Mammary epithelial cell (primary cell): ENCODE measurements at regions of chr10 and their contacts with region 1.

Region 1: GRCh38 chr10:127556916-127557315 is 7.8 kb downstream of the NPS start:
- DNase-seq: peak; percentile 6
- H3K4me3 ChIP-seq: no peak overlapping the region
- H3K27ac ChIP-seq: no peak overlapping the region
- H3K4me1 ChIP-seq: no peaks in the 10 kb centered on the region
- H3K27me3 ChIP-seq: no peaks in the 10 kb centered on the region
- CTCF ChIP-seq: no peak

Region 2: GRCh38 chr10:127456122-127456521 is 100.8 kb before region 1 on chr10:
- CTCF ChIA-PET with region 1: no interaction called
- dilution Hi-C with region 1: no loop called
- in situ Hi-C with region 1: no loop called
- intact Hi-C with region 1: no loop called
- DNase-seq: no peak
- H3K4me3 ChIP-seq: no peak overlapping the region
- H3K27ac ChIP-seq: no peak overlapping the region
- H3K4me1 ChIP-seq: peaks cover 2% of the 10 kb centered on the region
- H3K27me3 ChIP-seq: no peaks in the 10 kb centered on the region
- CTCF ChIP-seq: no peak

Region 3: GRCh38 chr10:127470911-127471310 is 86.0 kb before region 1 on chr10:
- CTCF ChIA-PET with region 1: no interaction called
- dilution Hi-C with region 1: loop called (anchors 5 kb)
- in situ Hi-C with region 1: no loop called
- intact Hi-C with region 1: no loop called
- DNase-seq: no peak
- H3K4me3 ChIP-seq: no peak overlapping the region
- H3K27ac ChIP-seq: no peak overlapping the region
- H3K4me1 ChIP-seq: no peaks in the 10 kb centered on the region
- H3K27me3 ChIP-seq: no peaks in the 10 kb centered on the region
- CTCF ChIP-seq: no peak